AG04450 (cell line): ENCODE measurements at regions of chr16 and their contacts with region 1.

Region 1: DNA sequence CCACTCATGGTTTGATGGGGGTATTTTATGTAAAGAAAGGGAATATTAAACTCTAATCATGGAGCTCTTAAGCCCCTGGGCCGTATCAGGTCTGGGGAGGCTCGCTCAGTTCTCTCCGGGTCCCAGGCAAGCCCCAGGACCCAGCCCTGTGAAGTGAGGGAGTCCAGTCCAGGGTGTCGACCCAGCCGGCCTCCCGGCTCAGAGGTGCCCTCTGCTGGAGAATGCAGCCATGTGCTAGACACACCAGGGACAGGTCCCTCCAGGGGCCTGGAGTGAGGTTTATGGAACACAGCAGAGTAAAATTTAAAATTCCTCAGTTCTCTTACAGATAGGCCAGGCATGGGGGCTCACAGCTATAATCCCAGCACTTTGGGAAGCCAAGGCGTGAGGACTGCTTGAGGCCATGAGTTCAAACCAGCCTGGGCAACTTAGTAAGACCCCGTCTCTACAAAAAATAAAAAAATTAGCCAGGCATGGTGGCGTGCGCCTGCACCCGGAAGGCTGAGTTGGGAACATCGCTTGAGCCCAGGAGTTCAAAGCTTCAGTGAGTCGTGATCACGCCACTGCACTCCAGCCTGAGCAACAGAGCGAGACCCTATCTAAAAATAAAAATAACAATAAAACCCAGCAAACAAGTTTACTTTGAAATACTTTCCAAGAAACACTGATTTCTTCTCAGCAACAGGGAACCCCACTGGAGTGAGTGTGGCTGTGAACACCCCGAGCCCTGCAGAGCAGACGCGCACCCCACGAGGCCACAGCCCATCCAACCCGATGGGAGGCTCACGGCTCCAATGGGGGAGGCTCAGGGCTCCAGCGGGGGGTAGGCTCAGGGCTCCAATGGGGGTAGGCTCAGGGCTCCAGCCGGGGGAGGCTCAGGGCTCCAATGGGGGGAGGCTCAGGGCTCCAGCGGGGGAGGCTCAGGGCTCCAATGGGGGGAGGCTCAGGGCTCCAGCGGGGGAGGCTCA is 72.2 kb downstream of the ZNF778 start:
- DNase-seq: peak; percentile 21
- H3K4me3 ChIP-seq: no peak overlapping the region
- H3K27ac ChIP-seq: no peak overlapping the region
- H3K27me3 ChIP-seq: no peaks in the 10 kb centered on the region
- CTCF ChIP-seq: peak; percentile 88

Region 2: GRCh38 chr16:89269805-89270665 is 19.7 kb before region 1 on chr16:
- CTCF ChIA-PET with region 1: interaction called, 11 read pairs
- POLR2A ChIA-PET with region 1: no interaction called
- DNase-seq: no peak
- H3K4me3 ChIP-seq: no peak overlapping the region
- H3K27ac ChIP-seq: no peak overlapping the region
- H3K27me3 ChIP-seq: no peaks in the 10 kb centered on the region
- CTCF ChIP-seq: no peak

Region 3: GRCh38 chr16:89507834-89508590 is 218.3 kb after region 1 on chr16 and contains the start of gene SPG7:
- CTCF ChIA-PET with region 1: interaction called, 18 read pairs
- POLR2A ChIA-PET with region 1: interaction called, 3 read pairs
- DNase-seq: peak; percentile 55
- H3K4me3 ChIP-seq: peak within 1 kb of the TSS; percentile 81
- H3K27ac ChIP-seq: peak within 1 kb of the TSS; percentile 87
- H3K27me3 ChIP-seq: no peaks in the 10 kb centered on the region
- CTCF ChIP-seq: no peak
- polyA plus RNA-seq, gene SPG7: 50.1 and 53.4 TPM in 2 replicates